ENCODE measurements at regions of chr2 and their contacts with region 1.

Region 1: DNA sequence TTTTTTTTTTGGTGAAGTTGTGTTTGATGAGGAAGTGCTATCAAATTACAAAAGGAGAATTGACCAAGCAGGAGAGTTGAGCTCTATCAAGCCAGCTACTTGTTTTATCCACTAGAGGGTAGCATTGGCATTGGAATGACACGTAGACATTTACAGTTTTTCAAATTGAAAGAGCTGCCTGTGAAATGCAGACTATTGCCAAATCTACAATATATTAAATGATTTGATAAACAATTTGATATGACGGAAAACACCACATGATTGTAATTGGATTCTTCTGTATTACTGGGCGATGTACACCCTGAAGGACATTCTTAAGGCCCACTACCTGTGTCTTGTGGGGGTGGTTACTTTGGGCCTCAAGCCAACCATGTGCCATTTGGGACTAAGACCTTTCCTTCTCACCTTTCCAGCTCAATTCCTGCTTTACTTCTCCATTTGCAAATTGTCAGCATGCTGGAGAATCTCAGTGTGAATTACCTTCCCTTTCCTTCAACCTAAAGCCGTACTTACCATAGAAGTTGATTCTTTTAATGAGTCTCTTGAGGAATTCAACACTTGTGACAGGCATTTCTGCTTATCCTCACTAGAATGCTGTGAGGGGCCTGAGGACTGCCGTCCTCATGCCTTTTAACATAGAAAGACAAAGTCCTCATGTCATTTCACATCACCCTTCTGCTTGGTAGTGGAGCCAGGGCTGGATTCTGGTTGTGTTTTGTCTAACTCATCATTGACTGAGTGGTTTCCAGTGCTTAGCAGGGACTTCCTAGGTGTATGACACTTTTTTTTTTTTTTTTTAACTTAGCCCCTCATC is 134.8 kb upstream of the THUMPD2 start:
- DNase-seq: no peak
- H3K4me3 ChIP-seq: no peak overlapping the region
- H3K27ac ChIP-seq: no peak overlapping the region
- H3K4me1 ChIP-seq: peaks cover 0 to 5% (median 1%) of the 10 kb centered on the region in 6 donors
- H3K27me3 ChIP-seq: no peaks in the 10 kb centered on the region
- CTCF ChIP-seq: peak; percentile 43 to 85 (median 71)
- POLR2A ChIP-seq: no peak

Region 2: DNA sequence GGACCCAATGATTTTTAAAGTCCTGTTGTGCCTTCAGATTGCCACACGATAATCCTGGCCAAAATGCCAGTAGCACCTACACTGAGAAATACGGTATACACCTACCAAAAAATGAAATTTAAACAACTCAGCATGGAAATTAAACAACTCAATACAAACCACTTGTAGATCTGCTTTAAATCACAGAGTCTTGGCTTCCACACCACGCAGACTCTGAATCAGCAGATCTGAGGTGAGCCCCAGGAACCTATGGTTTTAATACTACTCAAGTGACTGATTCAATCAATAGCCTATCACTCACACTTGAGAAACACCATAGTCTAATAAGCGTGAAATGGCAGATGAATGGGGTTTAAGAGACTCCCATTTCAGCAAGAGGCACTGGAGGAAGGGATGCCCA is 523.6 kb before region 1 on chr2:
- intact Hi-C with region 1: no loop called
- DNase-seq: no peak
- H3K4me3 ChIP-seq: no peak overlapping the region
- H3K27ac ChIP-seq: no peak overlapping the region
- H3K4me1 ChIP-seq: peaks cover 0 to 8% (median under 1%) of the 10 kb centered on the region in 6 donors
- H3K27me3 ChIP-seq: no peaks in the 10 kb centered on the region
- CTCF ChIP-seq: no peak
- POLR2A ChIP-seq: no peak

Region 3: DNA sequence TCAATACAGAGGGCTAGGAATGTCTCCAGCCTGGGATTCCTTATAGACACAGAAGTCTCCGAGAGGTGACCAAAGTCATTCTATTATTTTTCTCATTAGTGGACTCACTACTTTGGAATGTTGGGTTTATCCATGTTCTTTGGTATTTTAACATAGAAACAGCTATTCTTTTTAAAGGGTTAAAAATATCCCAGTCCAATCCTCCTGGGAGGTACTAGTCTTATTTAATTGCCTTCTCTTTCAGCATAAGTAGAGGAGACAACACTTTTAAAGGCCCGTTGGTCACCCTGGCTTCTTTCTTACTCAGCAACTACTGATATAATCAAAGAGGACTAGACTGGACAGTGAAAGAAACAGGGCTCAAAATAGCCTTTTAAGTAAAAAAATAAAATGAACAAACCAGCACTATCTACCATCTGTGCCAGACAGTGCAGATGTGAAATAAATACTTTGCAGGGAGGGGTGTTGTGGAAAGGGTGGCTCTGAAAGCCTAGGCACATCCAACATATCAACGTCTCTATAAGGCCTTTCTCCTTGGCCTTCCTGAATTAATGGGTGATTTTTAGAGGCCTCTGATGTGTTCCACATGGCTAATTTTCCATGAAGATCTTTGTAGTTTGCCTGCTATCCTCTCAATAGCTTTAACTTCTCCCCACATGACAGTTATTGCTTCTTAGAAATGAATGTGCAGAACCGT is 199.6 kb after region 1 on chr2:
- intact Hi-C with region 1: no loop called
- DNase-seq: no peak
- H3K4me3 ChIP-seq: no peak overlapping the region
- H3K27ac ChIP-seq: no peak overlapping the region
- H3K4me1 ChIP-seq: no peaks in the 10 kb centered on the region
- H3K27me3 ChIP-seq: no peaks in the 10 kb centered on the region
- CTCF ChIP-seq: no peak
- POLR2A ChIP-seq: no peak

Region 4: GRCh38 chr2:40554668-40555285 is 640.9 kb after region 1 on chr2:
- intact Hi-C with region 1: loop called (anchors 5 kb)
- DNase-seq: no peak
- H3K4me3 ChIP-seq: no peak overlapping the region
- H3K27ac ChIP-seq: no peak overlapping the region
- H3K4me1 ChIP-seq: peaks cover 0 to 8% (median 0%) of the 10 kb centered on the region in 6 donors
- H3K27me3 ChIP-seq: no peaks in the 10 kb centered on the region
- CTCF ChIP-seq: peak; percentile 50 to 88 (median 75)
- POLR2A ChIP-seq: no peak

Region 5: DNA sequence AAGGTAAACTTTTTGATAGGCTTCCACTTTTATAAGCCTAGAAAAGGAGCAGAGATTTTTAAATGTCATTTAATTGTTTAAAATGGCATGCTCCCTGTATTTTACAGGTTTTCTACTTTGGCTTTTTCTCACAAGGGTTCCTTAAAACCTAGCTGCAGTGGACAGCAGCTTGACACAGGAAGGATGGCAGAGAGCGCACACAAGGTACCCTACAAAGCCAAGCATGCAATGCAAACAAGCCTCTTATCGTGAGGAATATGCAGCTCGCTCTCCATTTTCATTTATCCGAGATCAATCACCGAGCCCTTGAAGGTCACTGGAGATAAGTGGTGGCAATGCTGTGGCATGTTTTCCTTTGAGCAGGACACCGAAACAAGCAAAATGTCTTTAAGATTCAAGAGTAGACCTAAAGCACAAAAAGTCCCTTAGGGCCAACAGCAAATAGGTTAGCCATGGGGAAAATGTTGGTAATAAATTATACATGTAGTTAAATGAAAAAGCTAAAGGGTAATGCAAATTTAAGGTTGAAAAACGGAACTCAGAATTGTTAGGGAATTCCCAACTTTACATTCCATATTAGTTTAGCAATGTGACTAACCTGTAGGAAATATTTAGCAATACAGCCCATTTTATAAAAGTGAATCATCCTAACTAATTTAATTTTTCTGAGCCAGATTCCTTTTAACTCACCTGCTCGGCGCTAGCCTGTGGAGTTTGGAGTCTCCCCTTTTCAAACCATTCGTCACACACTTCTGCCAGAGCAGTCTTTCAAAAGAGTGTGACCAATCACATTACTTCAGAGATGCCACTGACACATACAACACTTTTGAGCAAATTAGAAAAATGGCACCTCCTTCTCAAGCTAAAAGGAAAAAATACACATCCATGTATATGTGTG is 1796.1 kb after region 1 on chr2:
- intact Hi-C with region 1: loop called (anchors 10 kb)
- DNase-seq: no peak
- H3K4me3 ChIP-seq: no peak overlapping the region
- H3K27ac ChIP-seq: no peak overlapping the region
- H3K4me1 ChIP-seq: peaks cover 0 to 2% (median 0%) of the 10 kb centered on the region in 6 donors
- H3K27me3 ChIP-seq: no peaks in the 10 kb centered on the region
- CTCF ChIP-seq: no peak
- POLR2A ChIP-seq: no peak

Region 6: GRCh38 chr2:41782306-41783158 is 1868.7 kb after region 1 on chr2:
- intact Hi-C with region 1: loop called (anchors 5 kb)
- DNase-seq: no peak
- H3K4me3 ChIP-seq: no peak overlapping the region
- H3K27ac ChIP-seq: no peak overlapping the region
- H3K4me1 ChIP-seq: no peaks in the 10 kb centered on the region
- H3K27me3 ChIP-seq: peaks cover 0 to 6% (median 0%) of the 10 kb centered on the region in 7 donors
- CTCF ChIP-seq: peak; percentile 29 to 73 (median 69)
- POLR2A ChIP-seq: no peak

Measured in spleen (tissue), 13 donors.